ENCODE measurements at regions of chr5 and their contacts with region 1.

Region 1: GRCh38 chr5:14421851-14422250 is 159.7 kb upstream of the OTULINL start:
- DNase-seq: no peak
- H3K4me3 ChIP-seq: no peak overlapping the region
- H3K27ac ChIP-seq: no peak overlapping the region
- H3K4me1 ChIP-seq: peaks cover 4% of the 10 kb centered on the region
- H3K27me3 ChIP-seq: no peaks in the 10 kb centered on the region
- CTCF ChIP-seq: no peak
- POLR2A ChIP-seq: no peak

Region 2: GRCh38 chr5:14501353-14502293 is 79.8 kb after region 1 on chr5:
- CTCF ChIA-PET with region 1: no interaction called
- POLR2A ChIA-PET with region 1: no interaction called
- dilution Hi-C with region 1: no loop called
- intact Hi-C with region 1: loop called (anchors 2 kb)
- DNase-seq: no peak
- H3K4me3 ChIP-seq: no peak overlapping the region
- H3K27ac ChIP-seq: no peak overlapping the region
- H3K4me1 ChIP-seq: no peaks in the 10 kb centered on the region
- H3K27me3 ChIP-seq: no peaks in the 10 kb centered on the region
- CTCF ChIP-seq: no peak
- POLR2A ChIP-seq: no peak

Region 3: GRCh38 chr5:14700478-14701436 is 278.9 kb after region 1 on chr5:
- CTCF ChIA-PET with region 1: no interaction called
- POLR2A ChIA-PET with region 1: no interaction called
- dilution Hi-C with region 1: no loop called
- intact Hi-C with region 1: no loop called
- DNase-seq: no peak
- H3K4me3 ChIP-seq: no peak overlapping the region
- H3K27ac ChIP-seq: no peak overlapping the region
- H3K4me1 ChIP-seq: peaks cover under 1% of the 10 kb centered on the region
- H3K27me3 ChIP-seq: no peaks in the 10 kb centered on the region
- CTCF ChIP-seq: no peak
- POLR2A ChIP-seq: no peak